Activated CD8-positive, alpha-beta T cell treated with anti-CD3 and anti-CD28 coated beads for 36 hours (primary cell): ENCODE measurements at regions of chr16 and their contacts with region 1.

Region 1: DNA sequence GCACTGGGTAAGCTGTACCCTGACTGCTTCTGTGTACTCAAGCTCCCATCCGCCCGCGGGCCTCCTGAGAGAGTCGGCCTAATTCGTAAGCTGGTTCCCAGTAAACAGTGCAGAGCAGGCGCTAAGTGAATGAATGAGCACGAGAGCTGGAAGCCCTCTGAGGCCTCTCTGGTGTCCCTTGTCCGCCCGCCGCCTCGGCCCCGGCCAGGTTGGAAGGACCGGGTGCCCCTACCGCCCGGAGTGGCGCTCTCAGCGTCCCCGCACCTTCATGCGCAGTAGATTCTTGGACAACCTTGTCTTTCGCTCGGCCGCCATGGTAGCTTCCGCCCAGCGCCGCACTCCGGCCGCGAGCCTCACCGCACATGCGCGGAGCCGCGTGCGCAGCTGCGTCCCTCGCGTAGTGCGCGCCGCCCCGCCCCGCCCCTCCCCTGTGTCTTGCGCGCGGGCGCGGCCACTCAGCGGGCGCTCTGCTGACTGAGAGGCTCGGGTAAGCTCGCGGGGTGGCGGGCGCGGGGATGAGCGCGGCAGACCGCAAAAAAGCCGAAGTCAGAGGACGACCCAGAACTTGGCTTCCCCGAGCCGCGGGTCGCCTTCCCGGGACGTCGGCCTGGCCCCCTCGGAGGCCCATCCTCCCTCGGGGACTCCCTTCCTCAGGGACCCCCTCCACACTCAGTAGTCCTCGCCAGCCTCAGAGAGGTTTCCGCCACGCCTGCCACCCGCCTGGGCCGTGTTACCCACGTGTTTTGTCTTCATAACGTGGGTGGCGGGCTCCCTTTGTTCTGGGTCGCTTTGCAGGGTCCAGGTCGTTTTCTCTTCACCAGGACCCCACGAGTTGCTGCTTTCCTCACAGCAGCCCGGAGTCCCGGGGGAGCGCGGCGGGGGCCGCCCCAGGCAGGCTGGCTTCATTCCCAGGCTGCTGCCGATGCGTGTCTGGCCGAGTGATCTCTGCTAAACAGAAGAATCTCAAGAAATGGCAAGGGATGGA is at the start of gene MPHOSPH6:
- DNase-seq: peak; percentile 91
- ATAC-seq: peak; percentile 96
- H3K4me3 Mint-ChIP-seq: peak within 1 kb of the TSS; percentile 88
- H3K27ac Mint-ChIP-seq: peak within 1 kb of the TSS; percentile 99
- H3K4me1 Mint-ChIP-seq: peaks cover 31% of the 10 kb centered on the region
- H3K27me3 Mint-ChIP-seq: peaks cover 10% of the 10 kb centered on the region
- CTCF ChIP-seq: no peak
- total RNA-seq, gene MPHOSPH6: 46.9 to 51.2 TPM

Region 2: DNA sequence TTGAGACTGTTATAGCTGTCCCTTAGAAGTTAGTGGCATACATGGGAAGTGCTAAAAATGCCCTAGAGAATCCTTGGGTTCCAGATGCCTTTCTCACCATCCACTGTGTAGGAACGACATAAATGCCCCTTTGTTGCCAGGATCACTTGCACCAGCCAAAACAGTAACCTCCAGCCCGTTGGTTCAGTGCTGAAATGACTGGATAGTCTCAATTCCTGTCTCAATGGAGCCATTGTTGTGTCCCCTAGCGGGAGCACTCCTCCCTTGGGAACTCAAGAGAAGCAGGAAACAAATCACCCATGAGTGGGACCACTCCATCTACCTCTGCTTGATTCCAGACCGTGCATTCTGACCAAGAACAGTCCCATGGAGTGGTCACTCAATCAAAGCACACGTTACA is 23.2 kb before region 1 on chr16:
- CTCF ChIA-PET with region 1: no interaction called
- POLR2A ChIA-PET with region 1: no interaction called
- intact Hi-C with region 1: no loop called
- DNase-seq: no peak
- ATAC-seq: no peak
- H3K4me3 Mint-ChIP-seq: no peak overlapping the region
- H3K27ac Mint-ChIP-seq: no peak overlapping the region
- H3K4me1 Mint-ChIP-seq: no peaks in the 10 kb centered on the region
- H3K27me3 Mint-ChIP-seq: no peaks in the 10 kb centered on the region
- CTCF ChIP-seq: no peak

Region 3: GRCh38 chr16:82192665-82193064 is 22.5 kb after region 1 on chr16:
- CTCF ChIA-PET with region 1: no interaction called
- POLR2A ChIA-PET with region 1: interaction called, 13 read pairs
- intact Hi-C with region 1: no loop called
- DNase-seq: peak; percentile 68
- ATAC-seq: peak; percentile 98
- H3K4me3 Mint-ChIP-seq: peak overlapping the region; percentile 19
- H3K27ac Mint-ChIP-seq: peak overlapping the region; percentile 94
- H3K4me1 Mint-ChIP-seq: peaks cover 21% of the 10 kb centered on the region
- H3K27me3 Mint-ChIP-seq: peaks cover 8% of the 10 kb centered on the region
- CTCF ChIP-seq: no peak